OCI-LY7 (cell line): ENCODE measurements at regions of chr10 and their contacts with region 1.

Region 1: DNA sequence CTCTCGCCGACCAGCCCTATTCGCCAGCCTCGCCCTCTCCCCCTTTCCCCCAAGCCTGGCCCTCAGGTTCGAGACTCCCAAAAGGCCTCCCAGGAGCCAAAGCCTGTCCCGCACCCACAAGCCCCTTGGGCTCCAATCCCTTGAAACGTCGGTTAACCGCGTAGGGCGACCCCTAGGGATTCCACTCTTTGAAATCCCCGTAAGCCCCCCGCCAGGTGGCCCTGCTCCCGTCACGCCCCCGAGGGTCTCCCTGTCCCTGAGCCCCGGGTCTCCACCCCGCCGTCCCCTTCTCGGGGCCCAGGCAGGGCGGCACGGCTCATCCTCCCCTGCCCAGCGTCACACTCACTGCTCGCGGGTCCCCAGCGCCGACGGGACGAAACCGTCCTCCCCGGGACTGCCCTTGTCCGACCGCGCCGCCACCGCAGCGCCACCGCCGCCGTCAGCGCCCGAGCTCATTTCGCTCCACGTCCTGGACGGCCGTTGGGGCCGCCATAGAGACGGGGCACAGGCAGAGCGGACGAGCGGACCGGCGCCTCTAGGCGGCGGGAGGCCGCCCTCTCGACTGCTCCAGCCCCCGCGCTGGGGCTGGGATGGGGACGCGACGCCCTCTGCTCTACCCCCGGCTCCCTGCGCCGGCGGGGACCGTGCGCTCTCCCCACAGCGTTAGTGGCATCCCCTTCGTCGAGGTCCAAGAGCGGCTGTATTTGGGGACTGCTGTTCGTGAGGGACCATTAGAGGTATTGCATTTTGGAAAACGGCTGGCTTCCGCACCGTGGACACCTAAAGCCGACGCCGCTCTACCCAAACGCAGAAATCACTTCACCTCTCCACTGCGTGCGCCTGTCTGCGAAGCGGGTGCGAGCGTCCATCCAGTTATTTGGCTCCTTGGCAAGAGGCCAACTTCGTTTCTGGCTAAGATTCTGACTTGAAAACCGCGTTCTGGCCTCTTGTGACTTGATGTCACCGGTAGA is at the start of gene EEF1AKMT2:
- DNase-seq: peak; percentile 92
- H3K4me3 ChIP-seq: peak within 1 kb of the TSS; percentile 80
- H3K27ac ChIP-seq: peak within 1 kb of the TSS; percentile 81
- H3K4me1 ChIP-seq: peaks cover 13% of the 10 kb centered on the region
- CTCF ChIP-seq: peak; percentile 69
- total RNA-seq, gene EEF1AKMT2: 27.5 and 37.7 TPM in 2 replicates

Region 2: GRCh38 chr10:124677749-124678556 is 113.7 kb before region 1 on chr10:
- CTCF ChIA-PET with region 1: no interaction called
- POLR2A ChIA-PET with region 1: no interaction called
- intact Hi-C with region 1: no loop called
- DNase-seq: no peak
- H3K4me3 ChIP-seq: no peak overlapping the region
- H3K27ac ChIP-seq: no peak overlapping the region
- H3K4me1 ChIP-seq: peaks cover under 1% of the 10 kb centered on the region
- CTCF ChIP-seq: no peak

Region 3: GRCh38 chr10:124802313-124802675 is 10.6 kb after region 1 on chr10:
- CTCF ChIA-PET with region 1: no interaction called
- POLR2A ChIA-PET with region 1: interaction called, 4 read pairs
- intact Hi-C with region 1: loop called (anchors 1 kb)
- DNase-seq: peak; percentile 51
- H3K4me3 ChIP-seq: peak overlapping the region; percentile 84
- H3K27ac ChIP-seq: peak overlapping the region; percentile 64
- H3K4me1 ChIP-seq: peaks cover 10% of the 10 kb centered on the region
- CTCF ChIP-seq: no peak

Region 4: DNA sequence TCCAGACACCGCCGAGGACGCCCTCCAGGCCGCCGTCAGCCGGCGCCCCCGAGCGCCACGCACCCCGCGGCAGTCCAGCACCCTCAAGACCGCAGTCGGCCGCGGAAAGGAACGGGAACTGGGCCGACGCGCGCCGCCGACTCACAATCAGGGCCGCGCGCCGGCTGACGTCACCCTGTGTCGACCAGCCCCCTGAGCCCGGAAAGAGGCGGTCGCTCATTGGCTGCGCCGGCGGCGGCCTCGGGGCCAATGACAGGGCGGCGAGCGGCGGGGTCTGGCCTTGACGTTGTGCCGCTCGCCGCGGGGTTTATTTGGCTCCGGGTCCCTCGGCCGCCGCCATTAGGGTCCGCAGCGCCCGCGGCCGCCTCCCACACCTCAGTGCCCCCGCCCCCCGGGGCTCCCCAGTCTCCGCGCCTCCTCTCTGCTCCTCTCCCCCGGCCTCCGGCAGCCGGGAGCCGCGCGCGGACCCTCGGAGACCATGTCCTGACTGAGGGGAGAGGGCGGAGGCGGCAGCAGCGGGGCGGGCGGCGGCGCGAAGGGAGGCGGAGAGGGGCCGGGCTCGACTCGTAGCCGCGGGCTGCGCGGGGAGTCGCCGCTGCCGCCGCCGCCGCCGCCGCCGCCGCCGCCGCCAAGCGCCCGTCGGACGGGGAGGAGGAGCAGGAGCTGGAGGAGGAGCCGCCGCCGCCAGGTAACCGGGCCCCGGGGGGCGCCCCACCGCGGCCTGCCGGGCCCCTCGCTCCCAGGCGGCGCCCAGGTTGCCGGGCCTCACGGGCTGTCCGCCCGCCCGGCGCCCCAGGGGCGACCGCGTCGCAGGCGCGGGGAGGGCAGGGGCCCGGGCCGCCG is 125.1 kb after region 1 on chr10:
- CTCF ChIA-PET with region 1: no interaction called
- POLR2A ChIA-PET with region 1: no interaction called
- intact Hi-C with region 1: no loop called
- DNase-seq: peak; percentile 97
- H3K4me3 ChIP-seq: peak overlapping the region; percentile 92
- H3K27ac ChIP-seq: peak overlapping the region; percentile 63
- H3K4me1 ChIP-seq: peaks cover 19% of the 10 kb centered on the region
- CTCF ChIP-seq: no peak